HepG2 (cell line): ENCODE measurements at regions of chr9 and their contacts with region 1.

Region 1: GRCh38 chr9:100590481-100590880 is 12.6 kb downstream of the CAVIN4 start:
- DNase-seq: no peak
- ATAC-seq: no peak
- H3K4me3 ChIP-seq: no peak overlapping the region
- H3K27ac ChIP-seq: no peak overlapping the region
- H3K4me1 ChIP-seq: peaks cover 18% of the 10 kb centered on the region
- H3K27me3 ChIP-seq: no peaks in the 10 kb centered on the region
- CTCF ChIP-seq: no peak
- EP300 ChIP-seq: no peak
- POLR2A ChIP-seq: no peak
- RAD21 ChIP-seq: no peak

Region 2: DNA sequence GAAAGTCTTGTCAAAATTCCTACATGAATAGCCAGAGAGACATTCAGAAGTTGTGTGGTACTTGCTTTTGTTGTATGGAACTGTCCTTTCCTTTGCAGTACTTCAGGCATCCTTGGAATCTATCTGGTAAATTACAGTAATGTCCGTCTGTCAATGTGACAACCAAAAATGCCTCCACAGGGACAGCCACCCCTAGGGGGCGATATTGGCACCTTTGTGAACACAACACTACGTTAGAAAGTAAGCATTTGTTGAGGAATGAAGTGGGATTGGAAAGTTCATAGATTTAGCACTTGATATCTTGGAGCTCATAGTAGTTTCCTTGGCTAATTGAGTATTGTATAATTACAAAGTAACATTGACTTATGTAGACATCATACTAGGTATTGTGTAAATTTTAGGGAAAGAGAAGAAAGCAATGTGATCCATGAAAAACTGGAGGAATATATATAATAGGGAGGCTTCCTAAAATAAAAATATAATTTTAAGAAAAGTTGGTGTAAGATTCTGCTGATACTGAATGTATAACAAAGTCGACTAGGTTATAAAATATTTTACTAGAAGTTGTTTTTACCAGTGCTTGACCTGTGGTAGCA is 84.8 kb before region 1 on chr9:
- CTCF ChIA-PET with region 1: interaction called, 3 read pairs
- POLR2A ChIA-PET with region 1: no interaction called
- in situ Hi-C with region 1: loop called (anchors 5 kb)
- intact Hi-C with region 1: loop called (anchors 1 kb)
- DNase-seq: peak; percentile 67
- ATAC-seq: peak; percentile 87
- H3K4me3 ChIP-seq: no peak overlapping the region
- H3K27ac ChIP-seq: no peak overlapping the region
- H3K4me1 ChIP-seq: no peaks in the 10 kb centered on the region
- H3K27me3 ChIP-seq: no peaks in the 10 kb centered on the region
- CTCF ChIP-seq: peak; percentile 80
- EP300 ChIP-seq: no peak
- POLR2A ChIP-seq: no peak
- RAD21 ChIP-seq: peak; percentile 31; the same call in 1 of the 2 replicates

Region 3: DNA sequence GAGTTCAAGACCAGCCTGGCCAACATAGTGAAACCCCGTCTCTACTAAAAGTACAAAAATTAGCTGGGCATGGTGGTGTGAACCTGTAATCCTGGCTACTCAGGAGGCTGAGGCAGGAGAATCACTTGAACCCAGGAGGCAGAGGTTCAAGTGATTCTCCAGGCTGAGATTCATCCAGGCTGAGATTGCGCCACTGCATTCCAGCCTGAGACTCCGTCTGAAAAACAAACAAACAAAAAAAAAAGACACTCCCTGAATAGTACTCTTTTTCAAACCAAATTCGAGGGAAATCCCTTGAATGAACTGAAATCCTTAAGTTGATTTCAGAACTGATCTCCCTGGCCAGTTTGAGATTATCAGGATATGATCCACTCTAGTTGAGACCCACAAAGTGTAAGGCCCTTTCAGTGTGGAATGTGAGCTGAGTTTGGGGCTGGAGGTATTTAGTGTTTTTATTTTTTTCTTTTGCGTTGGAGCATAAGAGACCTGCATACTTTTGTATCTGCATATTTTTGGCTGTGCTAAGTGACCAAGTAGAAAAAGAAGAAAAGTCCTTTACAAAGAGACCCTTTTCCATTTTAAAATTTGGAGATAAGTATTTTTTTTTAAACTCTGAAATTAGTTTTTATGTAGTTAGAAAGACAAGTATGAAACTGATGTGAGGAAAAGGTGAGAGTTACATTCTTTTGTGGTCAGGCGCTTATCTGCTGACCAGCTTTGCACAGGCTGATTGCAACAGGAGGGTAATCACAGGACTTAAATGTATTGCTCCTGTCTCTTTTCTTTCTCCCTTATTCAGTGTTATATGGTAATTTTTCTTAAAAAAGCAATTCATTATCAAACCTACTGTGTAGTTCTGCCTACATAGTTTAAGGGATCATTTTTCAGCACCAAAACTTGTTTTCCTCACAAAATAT is 74.6 kb before region 1 on chr9:
- CTCF ChIA-PET with region 1: no interaction called
- POLR2A ChIA-PET with region 1: no interaction called
- in situ Hi-C with region 1: no loop called
- intact Hi-C with region 1: no loop called
- DNase-seq: no peak
- ATAC-seq: peak; percentile 72
- H3K4me3 ChIP-seq: no peak overlapping the region
- H3K27ac ChIP-seq: no peak overlapping the region
- H3K4me1 ChIP-seq: peaks cover 16% of the 10 kb centered on the region
- H3K27me3 ChIP-seq: no peaks in the 10 kb centered on the region
- CTCF ChIP-seq: no peak
- EP300 ChIP-seq: no peak
- POLR2A ChIP-seq: no peak
- RAD21 ChIP-seq: no peak

Region 4: GRCh38 chr9:100637787-100638186 is 47.3 kb after region 1 on chr9:
- CTCF ChIA-PET with region 1: no interaction called
- POLR2A ChIA-PET with region 1: no interaction called
- in situ Hi-C with region 1: no loop called
- intact Hi-C with region 1: no loop called
- DNase-seq: peak; percentile 58
- ATAC-seq: peak; percentile 43; the same call in 2 of the 3 replicates
- H3K4me3 ChIP-seq: no peak overlapping the region
- H3K27ac ChIP-seq: no peak overlapping the region
- H3K4me1 ChIP-seq: no peaks in the 10 kb centered on the region
- H3K27me3 ChIP-seq: no peaks in the 10 kb centered on the region; a peak in 1 of 5 replicates
- CTCF ChIP-seq: peak; percentile 25; the same call in 1 of the 2 replicates
- EP300 ChIP-seq: no peak
- POLR2A ChIP-seq: no peak
- RAD21 ChIP-seq: no peak